Activated CD4-positive, alpha-beta T cell treated with anti-CD3 and anti-CD28 coated beads, Interleukin-2, amount 10 ng/mL, durations not matched to agents 24 days and 14 days (primary cell): ENCODE measurements at regions of chr7 and their contacts with region 1.

Region 1: GRCh38 chr7:134730411-134730829 is 49.0 kb upstream of the CALD1 start:
- DNase-seq: no peak
- H3K4me3 Mint-ChIP-seq: no peak overlapping the region
- H3K27ac Mint-ChIP-seq: peak overlapping the region; percentile 20
- H3K4me1 Mint-ChIP-seq: peaks cover 14% of the 10 kb centered on the region
- H3K27me3 Mint-ChIP-seq: no peaks in the 10 kb centered on the region

Region 2: DNA sequence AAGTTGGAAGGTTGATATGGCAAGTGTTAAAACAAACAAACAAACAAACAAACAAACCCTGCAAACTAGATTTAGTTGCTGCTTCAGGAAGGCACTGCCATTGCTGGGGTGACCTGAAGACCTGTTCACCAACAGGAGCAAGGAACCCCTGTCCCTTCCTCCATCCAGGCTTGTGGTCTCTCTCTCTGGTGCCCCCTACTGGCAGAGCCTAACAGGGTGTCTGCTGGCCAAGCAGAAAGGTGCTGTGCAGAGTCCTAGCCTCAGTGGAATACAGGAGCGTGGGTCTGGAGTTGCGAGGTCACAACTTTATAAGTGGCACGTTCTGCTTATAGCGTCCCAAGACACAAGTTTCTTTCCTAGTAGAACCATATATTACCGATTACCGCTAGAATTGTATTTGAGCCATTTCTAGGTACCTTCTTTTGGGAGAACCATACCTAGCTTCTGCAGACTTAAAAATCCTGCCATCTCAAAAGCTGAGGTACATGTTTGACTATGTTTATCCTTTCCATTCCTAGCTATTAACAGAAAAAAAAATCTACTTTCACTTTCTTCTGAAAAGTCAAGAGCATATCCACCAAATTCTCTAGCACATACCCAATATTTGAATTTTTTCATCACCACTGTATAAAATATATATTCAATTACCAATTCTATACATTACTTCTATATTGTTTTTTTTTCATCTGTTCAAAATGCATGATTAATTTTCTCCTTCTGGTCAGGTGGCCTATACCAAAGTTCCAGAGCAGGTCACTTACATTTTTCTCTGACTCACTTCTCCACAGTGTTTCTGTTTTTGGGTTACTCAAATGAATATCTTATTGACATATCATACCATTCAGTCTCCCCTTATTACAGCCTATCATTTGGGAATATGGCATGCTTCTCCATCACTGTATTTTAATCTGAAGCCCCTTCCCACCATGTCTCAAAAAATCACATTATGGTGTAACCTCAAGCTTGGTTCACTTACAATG is 20.0 kb after region 1 on chr7:
- intact Hi-C with region 1: loop called (anchors 2 kb)
- DNase-seq: peak; percentile 85
- H3K4me3 Mint-ChIP-seq: no peak overlapping the region
- H3K27ac Mint-ChIP-seq: peak overlapping the region; percentile 74
- H3K4me1 Mint-ChIP-seq: peaks cover 8% of the 10 kb centered on the region
- H3K27me3 Mint-ChIP-seq: peaks cover 1% of the 10 kb centered on the region

Region 3: GRCh38 chr7:135553346-135553745 is 822.9 kb after region 1 on chr7:
- intact Hi-C with region 1: no loop called
- DNase-seq: no peak
- H3K4me3 Mint-ChIP-seq: no peak overlapping the region
- H3K27ac Mint-ChIP-seq: no peak overlapping the region
- H3K4me1 Mint-ChIP-seq: no peaks in the 10 kb centered on the region
- H3K27me3 Mint-ChIP-seq: peaks cover 10% of the 10 kb centered on the region